GM12878 (cell line): ENCODE measurements at regions of chr19 and their contacts with region 1.

Region 1: DNA sequence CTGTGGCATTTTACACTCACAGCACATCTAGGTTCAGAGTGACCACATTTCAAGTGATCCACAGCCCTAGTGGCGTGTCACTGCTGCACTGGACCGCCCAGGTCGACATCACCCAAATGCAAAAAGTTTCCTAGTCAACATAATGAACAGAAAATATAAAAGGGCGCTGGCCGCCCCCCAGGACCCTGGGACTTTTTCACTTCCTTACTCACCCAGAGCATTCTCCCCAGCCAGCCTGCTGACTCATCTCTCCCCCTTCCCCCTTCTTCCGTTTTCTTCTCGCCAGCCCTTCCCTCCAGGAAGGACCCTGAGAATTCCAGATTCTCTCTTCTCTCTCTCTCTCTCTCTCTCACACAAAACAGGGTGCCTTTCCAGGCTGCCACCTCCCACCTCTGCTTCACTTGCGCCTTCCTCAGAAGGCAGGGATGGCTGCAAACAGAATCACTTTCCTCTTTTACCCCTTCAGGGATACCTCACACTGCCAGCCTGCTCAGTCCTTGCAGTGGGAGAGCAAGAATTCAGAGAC is 21.0 kb upstream of the GRWD1 start:
- DNase-seq: no peak
- ATAC-seq: peak; percentile 84
- H3K4me3 ChIP-seq: 0 out of 2 replicates have a peak overlapping the region, but pooled peaks have one; percentile 33
- H3K27ac ChIP-seq: peak overlapping the region; percentile 24; the same call in 1 of the 2 replicates
- H3K4me1 ChIP-seq: peaks cover 6% of the 10 kb centered on the region
- H3K27me3 ChIP-seq: no peaks in the 10 kb centered on the region
- CTCF ChIP-seq: no peak
- EP300 ChIP-seq: no peak
- POLR2A ChIP-seq: no peak
- RAD21 ChIP-seq: no peak

Region 2: DNA sequence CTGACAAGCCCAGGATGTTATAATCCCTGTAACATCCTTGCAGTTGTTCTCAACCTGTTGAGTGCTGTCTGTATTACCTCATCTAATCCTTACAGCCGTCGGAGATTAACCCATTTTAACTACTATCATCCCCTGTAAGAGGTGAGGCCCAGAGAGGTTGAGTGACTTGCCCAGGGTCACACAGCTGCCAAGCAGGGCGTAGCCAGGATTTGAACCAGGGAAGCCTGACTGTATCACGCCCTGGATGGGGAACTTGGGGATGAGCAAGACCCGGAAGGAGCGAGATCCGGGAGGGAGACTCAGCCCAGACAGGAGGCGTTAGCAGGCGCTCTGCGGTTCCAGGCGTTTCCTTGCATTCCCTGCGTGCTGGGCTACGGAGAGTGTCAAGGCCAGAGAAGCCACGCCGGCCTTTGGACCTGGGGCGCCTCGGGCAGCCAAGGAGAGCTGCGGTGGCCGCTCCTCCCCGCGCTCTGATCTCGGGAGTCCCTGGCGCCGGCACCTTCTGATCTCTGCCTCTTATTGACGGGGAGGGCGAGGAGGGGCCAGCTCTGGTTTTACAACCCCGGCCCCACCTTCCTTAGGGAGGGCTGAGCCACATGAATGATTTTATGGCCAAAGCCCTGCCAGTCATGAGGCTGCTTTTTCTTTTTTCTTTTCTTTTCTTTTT is 133.4 kb after region 1 on chr19:
- CTCF ChIA-PET with region 1: no interaction called
- POLR2A ChIA-PET with region 1: interaction called, 14 read pairs
- RAD21 ChIA-PET with region 1: no interaction called
- SMC1A ChIA-PET with region 1: no interaction called
- in situ Hi-C with region 1: no loop called
- intact Hi-C with region 1: no loop called
- DNase-seq: no peak
- ATAC-seq: no peak
- H3K4me3 ChIP-seq: no peak overlapping the region
- H3K27ac ChIP-seq: no peak overlapping the region
- H3K4me1 ChIP-seq: no peaks in the 10 kb centered on the region
- H3K27me3 ChIP-seq: no peaks in the 10 kb centered on the region
- CTCF ChIP-seq: no peak
- EP300 ChIP-seq: no peak
- POLR2A ChIP-seq: no peak
- RAD21 ChIP-seq: no peak